Activated naive CD4-positive, alpha-beta T cell treated with anti-CD3 and anti-CD28 coated beads for 36 hours (primary cell): ENCODE measurements at regions of chr6 and their contacts with region 1.

Region 1: GRCh38 chr6:83057705-83058321 is 7.8 kb downstream of the UBE3D start:
- DNase-seq: peak; percentile 45
- H3K4me3 Mint-ChIP-seq: no peak overlapping the region
- H3K27ac Mint-ChIP-seq: no peak overlapping the region
- H3K4me1 Mint-ChIP-seq: peaks cover 9% of the 10 kb centered on the region
- H3K27me3 Mint-ChIP-seq: no peaks in the 10 kb centered on the region

Region 2: DNA sequence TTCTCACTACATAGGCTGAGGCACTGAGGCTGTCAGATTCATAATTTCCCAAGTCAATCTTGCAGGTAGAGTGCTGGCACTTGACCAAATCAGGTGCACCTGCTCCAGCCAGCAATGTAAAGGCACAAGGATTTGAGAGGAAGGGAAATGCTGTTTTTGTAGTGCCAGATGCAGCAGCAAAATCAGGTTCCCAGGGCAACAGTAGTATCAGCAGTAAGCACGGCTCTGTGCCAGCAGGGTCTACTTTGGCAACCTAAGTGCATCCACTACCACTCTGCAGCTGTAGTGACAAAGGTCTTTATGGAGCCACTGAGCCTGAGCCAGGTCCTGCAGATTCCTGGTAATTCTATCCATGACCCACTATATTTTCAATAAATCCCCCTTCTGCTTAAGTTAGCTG is 364.7 kb before region 1 on chr6:
- CTCF ChIA-PET with region 1: no interaction called
- intact Hi-C with region 1: loop called (anchors 10 kb)
- DNase-seq: no peak
- H3K4me3 Mint-ChIP-seq: no peak overlapping the region
- H3K27ac Mint-ChIP-seq: no peak overlapping the region
- H3K4me1 Mint-ChIP-seq: no peaks in the 10 kb centered on the region
- H3K27me3 Mint-ChIP-seq: no peaks in the 10 kb centered on the region

Region 3: DNA sequence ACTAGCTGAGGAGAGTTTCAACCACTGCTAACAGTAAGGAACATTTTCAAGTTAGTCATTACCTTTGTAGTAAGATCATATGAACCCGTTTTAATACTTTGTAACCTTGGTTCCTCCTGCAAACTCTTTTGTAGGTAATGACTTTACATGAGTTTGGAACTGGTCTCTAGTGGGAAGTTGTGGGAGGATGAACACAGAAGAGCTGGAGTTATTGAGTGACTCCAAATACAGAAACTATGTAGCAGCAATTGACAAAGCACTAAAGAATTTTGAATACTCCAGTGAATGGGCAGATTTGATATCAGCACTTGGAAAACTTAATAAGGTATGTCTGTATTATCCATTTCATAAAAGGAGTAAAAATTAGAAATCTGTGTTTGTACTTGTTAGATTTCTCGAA is 39.0 kb after region 1 on chr6:
- CTCF ChIA-PET with region 1: no interaction called
- intact Hi-C with region 1: no loop called
- DNase-seq: no peak
- H3K4me3 Mint-ChIP-seq: no peak overlapping the region
- H3K27ac Mint-ChIP-seq: no peak overlapping the region
- H3K4me1 Mint-ChIP-seq: no peaks in the 10 kb centered on the region
- H3K27me3 Mint-ChIP-seq: no peaks in the 10 kb centered on the region